Activated naive CD4-positive, alpha-beta T cell treated with anti-CD3 and anti-CD28 coated beads for 36 hours (primary cell): ENCODE measurements at regions of chr9 and their contacts with region 1.

Region 1: DNA sequence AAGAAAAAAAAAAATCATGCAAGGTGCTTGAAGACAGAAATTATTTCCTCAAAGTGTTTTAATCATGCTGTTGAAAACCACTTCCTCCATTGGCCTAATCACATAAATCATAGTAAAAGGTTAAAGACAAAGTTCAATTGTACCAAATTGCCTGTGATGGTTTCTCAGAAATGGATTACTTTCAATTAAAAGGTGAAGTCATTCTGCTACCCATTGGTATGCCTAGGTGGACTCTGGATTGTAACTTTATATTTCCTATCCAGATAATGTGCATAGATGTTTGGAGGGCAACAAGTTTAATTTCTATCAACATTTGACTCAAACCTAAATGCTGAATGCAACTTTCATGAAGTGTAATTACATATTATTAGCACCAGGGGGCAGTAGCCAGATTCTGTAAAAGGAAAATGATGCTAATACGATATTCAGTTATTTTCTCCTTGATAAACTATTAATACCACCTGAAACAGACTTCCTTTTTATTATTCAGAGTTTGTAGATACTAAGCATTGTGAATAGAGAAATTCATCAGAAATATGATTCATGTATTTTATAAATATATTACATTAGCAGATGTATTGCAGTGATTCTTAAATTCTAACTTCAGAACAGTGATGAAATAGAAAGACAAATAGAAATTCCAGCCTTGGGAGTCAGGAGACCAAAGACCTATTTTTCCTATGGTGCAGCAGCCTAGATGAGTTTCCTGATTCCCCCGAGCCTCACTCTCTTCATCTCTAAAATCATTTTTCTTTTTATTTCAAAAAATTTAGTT is 148.2 kb downstream of the CAAP1 start:
- DNase-seq: no peak
- H3K4me3 Mint-ChIP-seq: no peak overlapping the region
- H3K27ac Mint-ChIP-seq: no peak overlapping the region
- H3K4me1 Mint-ChIP-seq: no peaks in the 10 kb centered on the region
- H3K27me3 Mint-ChIP-seq: peaks cover 9% of the 10 kb centered on the region

Region 2: GRCh38 chr9:26856413-26857032 is 112.1 kb after region 1 on chr9:
- CTCF ChIA-PET with region 1: no interaction called
- intact Hi-C with region 1: loop called (anchors 1 kb)
- DNase-seq: peak; percentile 37
- H3K4me3 Mint-ChIP-seq: no peak overlapping the region
- H3K27ac Mint-ChIP-seq: no peak overlapping the region
- H3K4me1 Mint-ChIP-seq: peaks cover 2% of the 10 kb centered on the region
- H3K27me3 Mint-ChIP-seq: no peaks in the 10 kb centered on the region

Region 3: DNA sequence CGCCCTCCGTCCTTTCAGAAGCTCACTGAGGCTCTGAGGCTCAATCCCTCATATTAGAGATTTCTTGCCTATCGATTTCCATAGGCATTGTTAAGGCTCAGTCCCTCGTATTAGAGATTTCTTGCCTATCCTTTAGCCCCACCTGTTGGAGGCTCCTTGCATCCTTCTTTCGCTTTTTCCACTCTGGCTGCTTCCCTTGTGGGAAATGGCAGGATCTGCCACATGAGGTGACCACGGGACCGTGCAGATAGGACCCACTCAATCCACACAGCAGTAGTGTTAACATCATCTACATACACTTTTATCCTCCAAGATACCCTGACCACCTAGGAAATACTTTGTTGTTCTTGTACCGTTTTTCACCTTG is 231.3 kb after region 1 on chr9:
- CTCF ChIA-PET with region 1: no interaction called
- intact Hi-C with region 1: loop called (anchors 1 kb)
- DNase-seq: peak; percentile 8
- H3K4me3 Mint-ChIP-seq: no peak overlapping the region
- H3K27ac Mint-ChIP-seq: no peak overlapping the region
- H3K4me1 Mint-ChIP-seq: no peaks in the 10 kb centered on the region
- H3K27me3 Mint-ChIP-seq: no peaks in the 10 kb centered on the region

Region 4: DNA sequence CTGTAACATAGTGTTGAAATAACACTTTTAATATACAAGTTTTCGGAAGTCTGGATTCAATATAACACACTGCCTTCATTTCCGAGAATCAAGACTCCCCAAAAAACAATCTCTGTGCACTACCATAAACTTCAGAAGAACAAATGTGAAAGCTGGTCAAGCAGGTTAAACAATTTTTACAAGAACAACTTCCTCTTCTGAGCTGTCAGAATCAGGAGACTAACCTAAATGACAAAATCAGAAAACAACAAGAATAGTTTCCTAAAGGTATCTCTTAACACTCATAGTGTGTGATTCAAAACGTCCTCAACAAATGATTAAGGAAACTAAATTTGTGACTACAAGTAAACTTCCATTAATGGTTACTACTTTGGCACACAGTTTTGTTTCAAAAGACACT is 817.3 kb after region 1 on chr9:
- CTCF ChIA-PET with region 1: no interaction called
- intact Hi-C with region 1: no loop called
- DNase-seq: no peak
- H3K4me3 Mint-ChIP-seq: no peak overlapping the region
- H3K27ac Mint-ChIP-seq: no peak overlapping the region
- H3K4me1 Mint-ChIP-seq: peaks cover 28% of the 10 kb centered on the region
- H3K27me3 Mint-ChIP-seq: no peaks in the 10 kb centered on the region